Activated CD4-positive, alpha-beta T cell treated with anti-CD3 and anti-CD28 coated beads, Interleukin-2, amount 10 ng/mL, durations not matched to agents 24 days and 14 days (primary cell): ENCODE measurements at regions of chr1 and their contacts with region 1.

Region 1: DNA sequence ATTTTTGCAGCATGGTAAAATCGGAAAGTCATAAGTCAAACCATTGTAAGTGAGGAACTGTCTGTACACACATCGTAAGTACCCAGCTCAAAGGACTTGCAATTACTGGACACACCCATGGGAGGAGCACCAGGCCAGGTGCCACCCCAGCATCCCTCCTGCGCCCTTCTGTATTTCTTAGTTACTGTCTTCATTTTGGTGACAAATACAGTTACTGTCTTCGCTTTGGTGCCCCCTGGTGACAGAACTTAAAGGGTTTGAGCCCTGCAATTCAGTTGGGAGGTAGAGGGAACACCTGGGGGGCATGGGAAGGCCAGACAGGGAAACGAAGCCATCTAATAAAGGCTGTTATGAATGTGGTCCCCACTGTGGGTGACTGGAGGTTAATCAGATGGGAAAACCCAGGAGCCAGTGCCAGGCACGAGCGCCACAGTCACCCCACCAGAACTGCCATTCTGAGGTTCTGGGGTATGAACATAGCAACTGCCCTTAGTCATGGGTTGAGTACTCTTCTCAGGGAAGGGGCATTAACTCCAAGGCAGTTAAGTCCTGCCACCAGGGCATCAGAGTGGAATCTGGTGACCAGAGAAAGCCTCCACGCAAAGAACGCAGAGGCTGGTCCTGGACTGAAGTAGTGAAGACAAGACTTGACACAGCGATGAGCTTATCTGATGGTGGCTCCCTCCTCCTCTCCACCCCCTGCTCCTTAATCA is 612.9 kb downstream of the PTPRU start:
- DNase-seq: peak; percentile 86
- H3K4me3 Mint-ChIP-seq: no peak overlapping the region
- H3K27ac Mint-ChIP-seq: no peak overlapping the region
- H3K4me1 Mint-ChIP-seq: no peaks in the 10 kb centered on the region
- H3K27me3 Mint-ChIP-seq: peaks cover 2% of the 10 kb centered on the region

Region 2: GRCh38 chr1:29513357-29513756 is 335.8 kb before region 1 on chr1:
- intact Hi-C with region 1: loop called (anchors 2 kb)
- DNase-seq: peak; percentile 68
- H3K4me3 Mint-ChIP-seq: no peak overlapping the region
- H3K27ac Mint-ChIP-seq: no peak overlapping the region
- H3K4me1 Mint-ChIP-seq: no peaks in the 10 kb centered on the region
- H3K27me3 Mint-ChIP-seq: peaks cover 23% of the 10 kb centered on the region

Region 3: GRCh38 chr1:29688471-29689365 is 160.5 kb before region 1 on chr1:
- intact Hi-C with region 1: loop called (anchors 5 kb)
- DNase-seq: peak; percentile 74
- H3K4me3 Mint-ChIP-seq: peak overlapping the region; percentile 38
- H3K27ac Mint-ChIP-seq: peak overlapping the region; percentile 80
- H3K4me1 Mint-ChIP-seq: peaks cover 29% of the 10 kb centered on the region
- H3K27me3 Mint-ChIP-seq: peaks cover 8% of the 10 kb centered on the region